Astrocyte of the cerebellum (primary cell): ENCODE measurements at regions of chr20 and their contacts with region 1.

Region 1: DNA sequence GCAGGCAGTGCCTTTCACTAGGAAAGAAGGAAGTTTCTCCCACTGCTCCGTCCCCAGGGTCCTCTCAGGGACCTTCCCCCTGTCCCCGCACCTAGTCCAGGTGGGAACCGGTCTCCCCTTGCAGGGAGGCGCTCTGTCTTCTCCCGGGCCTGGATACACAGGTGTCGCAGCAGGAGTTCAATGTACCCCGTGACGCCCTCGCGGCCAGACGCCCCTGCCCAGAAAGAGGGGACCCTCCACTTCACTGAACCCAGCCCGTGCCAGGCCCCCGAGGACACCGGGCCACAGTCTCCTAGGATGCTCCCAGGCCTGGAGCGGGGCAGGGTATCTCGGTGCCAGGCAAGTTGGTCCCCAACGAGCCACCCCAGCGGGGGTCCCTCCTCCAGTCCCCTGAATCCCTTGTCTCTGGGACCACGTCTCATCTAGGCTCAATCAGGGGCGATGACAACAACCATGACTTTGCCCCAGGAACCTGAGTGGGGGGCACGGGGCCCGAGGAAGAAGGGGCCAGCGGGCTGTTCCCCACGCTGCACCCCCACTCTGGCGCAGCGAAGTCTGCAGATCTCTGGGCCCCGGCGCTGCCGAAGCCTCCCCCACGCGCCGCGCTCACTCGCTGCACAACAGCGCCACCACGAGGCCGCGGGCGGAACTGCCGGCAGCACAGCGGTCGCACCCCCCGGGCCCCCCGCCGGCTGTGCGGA is 103.0 kb downstream of the EDN3 start:
- DNase-seq: no peak
- H3K4me3 ChIP-seq: no peak overlapping the region
- CTCF ChIP-seq: peak; percentile 69

Region 2: DNA sequence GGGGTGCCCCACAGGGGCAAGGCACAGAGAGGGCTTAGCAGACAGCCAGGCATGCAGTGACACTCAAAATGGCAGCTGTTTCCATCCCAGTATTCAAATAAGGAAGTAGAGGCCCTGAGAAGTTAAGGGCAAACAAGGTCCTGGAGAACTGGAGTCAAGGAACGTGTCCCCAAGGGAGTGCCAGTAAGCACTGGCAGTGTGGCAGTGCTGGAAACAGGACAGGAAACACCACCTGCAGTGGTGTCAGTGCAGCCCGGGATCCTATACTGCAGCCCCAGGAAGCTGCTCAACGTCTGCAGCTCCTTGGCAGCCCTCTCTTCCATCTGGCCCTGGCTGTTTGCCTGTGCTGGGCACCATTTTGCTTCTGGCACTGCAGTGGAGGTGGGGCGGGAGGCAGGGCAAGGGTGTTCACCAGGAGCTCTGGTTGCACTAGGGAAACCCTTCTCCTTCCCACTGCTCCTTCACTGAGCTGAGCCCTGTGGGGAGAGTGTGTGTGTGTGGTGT is 46.7 kb before region 1 on chr20:
- in situ Hi-C with region 1: loop called (anchors 5 kb)
- DNase-seq: no peak
- H3K4me3 ChIP-seq: no peak overlapping the region
- CTCF ChIP-seq: no peak